Caco-2 (cell line): ENCODE measurements at regions of chr15 and their contacts with region 1.

Region 1: DNA sequence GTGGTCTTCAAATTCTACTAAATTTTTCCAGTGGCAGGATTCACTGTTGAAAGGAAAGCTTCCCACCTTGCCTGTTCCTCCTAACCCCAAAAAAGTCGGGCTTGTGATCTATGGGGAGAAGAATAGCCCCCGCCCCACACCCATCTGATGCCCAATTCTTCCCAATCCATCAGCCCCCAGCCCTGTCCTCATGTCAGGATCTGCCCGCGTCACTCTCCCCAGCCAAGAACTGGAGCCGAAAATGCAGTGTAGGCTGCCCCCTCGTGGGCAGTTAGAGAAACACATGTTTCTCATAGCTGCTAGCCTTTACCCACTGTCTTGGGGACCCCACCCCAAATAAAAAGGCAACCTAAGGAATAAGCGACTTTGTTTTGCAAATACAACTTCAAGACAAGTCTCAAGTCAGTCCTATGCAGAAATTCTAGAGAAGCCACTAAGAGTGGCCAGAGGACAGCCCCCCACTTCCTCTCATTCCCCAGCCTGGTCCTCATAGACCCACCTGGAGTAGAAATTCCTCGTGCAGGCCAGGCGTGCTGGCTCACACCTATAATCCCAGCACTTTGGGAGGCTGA is 13.0 kb upstream of the CSK start:
- DNase-seq: peak; percentile 74 to 75
- H3K4me3 ChIP-seq: no peak overlapping the region
- H3K4me3 Mint-ChIP-seq: peak overlapping the region; percentile 52
- H3K27ac Mint-ChIP-seq: peak overlapping the region; percentile 58
- H3K4me1 ChIP-seq: peaks cover 4% of the 10 kb centered on the region; the same call in 1 of the 2 replicates
- H3K4me1 Mint-ChIP-seq: peaks cover 7% of the 10 kb centered on the region
- H3K27me3 ChIP-seq: no peaks in the 10 kb centered on the region
- H3K27me3 Mint-ChIP-seq: no peaks in the 10 kb centered on the region
- CTCF ChIP-seq: peak; percentile 77 to 78

Region 2: GRCh38 chr15:74540761-74541493 is 227.9 kb before region 1 on chr15 and contains the start of gene ARID3B:
- CTCF ChIA-PET with region 1: interaction called, 10 read pairs
- POLR2A ChIA-PET with region 1: no interaction called
- intact Hi-C with region 1: no loop called
- DNase-seq: peak; percentile 94 to 98
- H3K4me3 ChIP-seq: peak within 1 kb of the TSS; percentile 91
- H3K4me3 Mint-ChIP-seq: peak within 1 kb of the TSS; percentile 87
- H3K27ac Mint-ChIP-seq: peak within 1 kb of the TSS; percentile 86
- H3K4me1 ChIP-seq: peaks cover 12% of the 10 kb centered on the region
- H3K4me1 Mint-ChIP-seq: peaks cover 13% of the 10 kb centered on the region
- H3K27me3 ChIP-seq: no peaks in the 10 kb centered on the region
- H3K27me3 Mint-ChIP-seq: no peaks in the 10 kb centered on the region
- CTCF ChIP-seq: no peak
- total RNA-seq, gene ARID3B: 36.1 and 37.0 TPM in 2 replicates

Region 3: DNA sequence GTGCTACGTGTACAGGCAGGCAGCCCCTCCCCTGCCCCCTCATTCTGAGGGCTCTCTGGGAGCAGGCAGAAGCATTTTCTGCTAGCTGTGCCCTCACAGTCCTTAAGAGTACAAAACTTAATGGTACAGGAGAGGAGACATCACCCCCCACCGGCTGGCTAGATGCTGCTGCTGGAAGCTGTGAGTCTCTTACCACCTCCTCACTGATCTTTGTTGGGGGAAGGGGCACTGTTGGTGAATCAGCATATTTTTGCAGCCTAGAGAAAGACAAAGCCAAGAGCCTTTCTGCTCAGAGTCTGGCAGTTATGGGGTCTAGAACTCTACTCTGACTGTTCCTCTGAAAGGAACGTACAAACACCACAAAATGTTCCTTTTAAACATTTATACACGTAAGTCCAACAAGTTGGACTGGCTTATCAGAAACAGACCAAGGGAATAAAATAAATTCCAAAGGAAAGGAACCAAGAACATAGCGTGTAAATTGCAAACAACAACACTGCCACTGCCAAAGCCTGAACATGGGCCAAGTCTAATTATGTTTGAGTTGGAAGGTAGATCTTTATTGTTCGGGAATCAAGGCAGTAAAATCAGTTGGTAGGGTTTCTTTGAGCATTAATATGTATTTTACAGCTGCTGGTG is 126.0 kb before region 1 on chr15:
- CTCF ChIA-PET with region 1: interaction called, 211 read pairs
- POLR2A ChIA-PET with region 1: interaction called, 7 read pairs
- intact Hi-C with region 1: loop called (anchors 2 kb)
- DNase-seq: peak in 1 of 2 experiments; percentile 75
- H3K4me3 ChIP-seq: no peak overlapping the region
- H3K4me3 Mint-ChIP-seq: peak overlapping the region; percentile 48
- H3K27ac Mint-ChIP-seq: peak overlapping the region; percentile 90
- H3K4me1 ChIP-seq: peaks cover 54% of the 10 kb centered on the region
- H3K4me1 Mint-ChIP-seq: peaks cover 57% of the 10 kb centered on the region
- H3K27me3 ChIP-seq: no peaks in the 10 kb centered on the region
- H3K27me3 Mint-ChIP-seq: no peaks in the 10 kb centered on the region
- CTCF ChIP-seq: no peak

Region 4: DNA sequence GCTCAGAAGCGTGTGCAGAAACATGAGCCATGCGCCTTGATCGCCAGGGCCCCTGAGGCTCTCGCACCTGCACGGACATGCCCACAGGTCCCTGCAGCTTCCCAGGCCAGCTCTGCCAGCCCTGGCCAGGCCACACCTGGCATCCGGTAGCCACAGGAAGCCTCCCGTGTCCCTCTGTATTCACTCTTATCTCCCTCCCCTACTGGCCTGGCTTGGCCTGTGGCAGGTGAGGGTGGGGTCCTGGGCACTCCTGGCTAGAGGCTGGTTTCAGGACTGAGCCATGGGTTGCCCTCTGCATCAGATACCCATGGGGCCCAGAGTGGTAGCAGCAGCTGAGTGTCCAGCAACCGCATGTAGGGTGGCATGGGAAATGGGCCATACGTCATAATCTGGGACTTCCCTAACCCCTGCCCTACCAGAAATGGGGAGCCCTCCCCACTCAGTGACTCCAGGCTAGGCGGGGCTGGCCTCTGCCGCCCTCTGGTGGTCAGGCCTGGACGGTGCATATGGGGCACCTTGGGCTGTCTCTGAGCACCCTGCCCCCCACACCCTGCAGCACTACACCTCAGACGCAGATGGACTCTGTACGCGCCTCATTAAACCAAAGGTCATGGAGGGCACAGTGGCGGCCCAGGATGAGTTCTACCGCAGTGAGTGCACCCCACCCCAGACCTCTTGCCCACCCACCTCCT is 31.1 kb after region 1 on chr15:
- CTCF ChIA-PET with region 1: interaction called, 12 read pairs
- POLR2A ChIA-PET with region 1: no interaction called
- intact Hi-C with region 1: loop called (anchors 1 kb)
- DNase-seq: peak; percentile 61 to 83
- H3K4me3 ChIP-seq: no peak overlapping the region
- H3K4me3 Mint-ChIP-seq: no peak overlapping the region
- H3K27ac Mint-ChIP-seq: no peak overlapping the region
- H3K4me1 ChIP-seq: no peaks in the 10 kb centered on the region
- H3K4me1 Mint-ChIP-seq: no peaks in the 10 kb centered on the region
- H3K27me3 ChIP-seq: no peaks in the 10 kb centered on the region
- H3K27me3 Mint-ChIP-seq: no peaks in the 10 kb centered on the region
- CTCF ChIP-seq: peak; percentile 95 to 98

Region 5: DNA sequence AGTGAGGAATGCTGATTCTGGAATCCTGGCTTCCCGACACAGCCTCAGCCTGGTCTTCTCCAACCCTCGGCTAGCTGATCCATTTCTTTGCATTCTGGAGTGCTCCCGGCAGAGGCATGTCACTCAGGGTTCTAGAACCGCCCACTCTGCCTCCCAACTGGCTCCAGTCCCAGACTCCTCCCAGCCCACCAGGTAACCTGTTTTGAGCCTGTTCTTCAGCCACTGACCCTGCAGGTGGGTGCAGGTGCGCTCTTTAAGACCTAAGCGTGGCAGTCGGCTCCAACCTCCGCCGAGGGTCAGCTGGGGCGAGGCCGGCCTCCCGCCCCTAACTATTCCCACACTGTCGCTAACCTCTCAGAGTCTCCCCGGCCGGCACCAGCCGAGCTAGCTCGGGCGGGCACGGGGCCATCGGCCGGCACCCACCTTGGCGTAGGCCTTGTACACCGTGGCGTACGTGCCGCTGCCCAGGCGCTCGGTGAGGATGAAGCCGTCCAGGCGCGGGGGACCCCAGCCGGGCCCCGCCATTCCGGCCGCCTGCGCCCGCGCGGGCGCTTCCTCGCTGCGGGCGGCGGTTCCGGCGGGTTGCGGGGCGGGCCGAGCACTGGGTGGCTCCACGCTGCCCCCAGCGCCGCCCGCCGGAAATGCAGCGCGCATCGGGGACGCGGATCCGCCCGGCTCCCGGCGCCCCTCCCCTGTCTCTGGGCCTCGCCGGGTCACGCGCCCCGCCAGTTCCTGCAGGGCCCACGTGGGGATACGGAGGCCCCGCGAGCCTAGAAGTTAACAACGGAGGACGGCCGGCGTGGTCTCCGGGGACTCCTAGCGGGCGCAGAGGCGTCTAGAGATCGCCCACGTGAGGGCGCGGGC is 74.0 kb after region 1 on chr15 and contains the start of gene ULK3:
- CTCF ChIA-PET with region 1: interaction called, 6 read pairs
- POLR2A ChIA-PET with region 1: no interaction called
- intact Hi-C with region 1: loop called (anchors 2 kb)
- DNase-seq: peak; percentile 93 to 95
- H3K4me3 ChIP-seq: peak within 1 kb of the TSS; percentile 90
- H3K4me3 Mint-ChIP-seq: peak within 1 kb of the TSS; percentile 84
- H3K27ac Mint-ChIP-seq: peak within 1 kb of the TSS; percentile 80
- H3K4me1 ChIP-seq: peaks cover 13% of the 10 kb centered on the region
- H3K4me1 Mint-ChIP-seq: peaks cover 6% of the 10 kb centered on the region
- H3K27me3 ChIP-seq: no peaks in the 10 kb centered on the region
- H3K27me3 Mint-ChIP-seq: no peaks in the 10 kb centered on the region
- CTCF ChIP-seq: peak; percentile 40 to 81
- total RNA-seq, gene ULK3: 28.2 and 33.4 TPM in 2 replicates

Region 6: GRCh38 chr15:74924525-74924924 is 155.7 kb after region 1 on chr15:
- CTCF ChIA-PET with region 1: no interaction called
- POLR2A ChIA-PET with region 1: no interaction called
- intact Hi-C with region 1: no loop called
- DNase-seq: no peak
- H3K4me3 ChIP-seq: no peak overlapping the region
- H3K4me3 Mint-ChIP-seq: no peak overlapping the region
- H3K27ac Mint-ChIP-seq: no peak overlapping the region
- H3K4me1 ChIP-seq: no peaks in the 10 kb centered on the region
- H3K4me1 Mint-ChIP-seq: no peaks in the 10 kb centered on the region
- H3K27me3 ChIP-seq: no peaks in the 10 kb centered on the region
- H3K27me3 Mint-ChIP-seq: no peaks in the 10 kb centered on the region
- CTCF ChIP-seq: no peak

Region 7: GRCh38 chr15:74950078-74951000 is 181.5 kb after region 1 on chr15:
- CTCF ChIA-PET with region 1: interaction called, 13 read pairs
- POLR2A ChIA-PET with region 1: no interaction called
- intact Hi-C with region 1: loop called (anchors 1 kb)
- DNase-seq: peak; percentile 80 to 84
- H3K4me3 ChIP-seq: no peak overlapping the region
- H3K4me3 Mint-ChIP-seq: no peak overlapping the region
- H3K27ac Mint-ChIP-seq: no peak overlapping the region
- H3K4me1 ChIP-seq: peaks cover 14% of the 10 kb centered on the region
- H3K4me1 Mint-ChIP-seq: peaks cover 14% of the 10 kb centered on the region
- H3K27me3 ChIP-seq: no peaks in the 10 kb centered on the region
- H3K27me3 Mint-ChIP-seq: no peaks in the 10 kb centered on the region
- CTCF ChIP-seq: peak; percentile 92 to 96

Region 8: GRCh38 chr15:75049392-75049791 is 280.5 kb after region 1 on chr15:
- CTCF ChIA-PET with region 1: no interaction called
- POLR2A ChIA-PET with region 1: no interaction called
- intact Hi-C with region 1: no loop called
- DNase-seq: no peak
- H3K4me3 ChIP-seq: no peak overlapping the region
- H3K4me3 Mint-ChIP-seq: no peak overlapping the region
- H3K27ac Mint-ChIP-seq: no peak overlapping the region
- H3K4me1 ChIP-seq: peaks cover 13% of the 10 kb centered on the region; the same call in 1 of the 2 replicates
- H3K4me1 Mint-ChIP-seq: peaks cover 13% of the 10 kb centered on the region
- H3K27me3 ChIP-seq: no peaks in the 10 kb centered on the region
- H3K27me3 Mint-ChIP-seq: no peaks in the 10 kb centered on the region
- CTCF ChIP-seq: no peak